Activated CD4-positive, alpha-beta T cell treated with anti-CD3 and anti-CD28 coated beads for 36 hours (primary cell): ENCODE measurements at regions of chr16 and their contacts with region 1.

Region 1: DNA sequence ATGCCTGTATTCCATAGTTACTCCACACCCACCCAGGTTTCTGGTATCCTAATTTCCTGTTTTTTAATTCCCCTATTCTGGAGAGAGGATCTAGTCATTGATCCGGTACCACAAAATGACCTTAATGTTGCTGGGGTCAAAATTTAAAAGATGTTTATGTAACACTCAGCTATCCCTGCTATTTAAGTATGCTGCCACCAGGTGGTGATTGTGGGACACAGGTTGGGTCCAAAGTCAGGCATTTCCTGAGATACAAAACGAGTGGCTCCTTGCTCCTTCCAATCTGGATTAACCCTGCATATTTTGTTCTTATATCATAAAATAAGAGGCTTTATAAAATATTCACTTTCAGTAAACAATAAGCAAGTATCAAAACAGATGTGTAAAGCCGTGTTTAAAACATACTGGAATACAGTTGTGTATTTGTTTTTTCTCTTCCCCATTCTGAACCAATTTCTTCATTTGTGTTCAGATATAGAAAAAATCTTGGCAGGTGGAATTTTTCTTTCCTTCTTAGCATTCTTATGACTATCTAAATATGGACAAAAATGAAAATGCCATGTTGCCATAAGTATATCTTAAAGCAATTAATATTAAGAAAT is 16.3 kb downstream of the HS3ST4 start:
- DNase-seq: peak; percentile 53
- ATAC-seq: no peak
- H3K4me3 Mint-ChIP-seq: no peak overlapping the region
- H3K27ac Mint-ChIP-seq: no peak overlapping the region
- H3K4me1 Mint-ChIP-seq: no peaks in the 10 kb centered on the region
- H3K27me3 Mint-ChIP-seq: peaks cover 16% of the 10 kb centered on the region

Region 2: GRCh38 chr16:25279491-25279890 is 428.6 kb before region 1 on chr16:
- CTCF ChIA-PET with region 1: no interaction called
- POLR2A ChIA-PET with region 1: no interaction called
- intact Hi-C with region 1: loop called in 1 of 2 experiments (anchors 1 kb)
- DNase-seq: no peak
- ATAC-seq: no peak
- H3K4me3 Mint-ChIP-seq: no peak overlapping the region
- H3K27ac Mint-ChIP-seq: no peak overlapping the region
- H3K4me1 Mint-ChIP-seq: no peaks in the 10 kb centered on the region
- H3K27me3 Mint-ChIP-seq: peaks cover 2% of the 10 kb centered on the region